CD4-positive, alpha-beta memory T cell (primary cell): ENCODE measurements at regions of chr1 and their contacts with region 1.

Region 1: DNA sequence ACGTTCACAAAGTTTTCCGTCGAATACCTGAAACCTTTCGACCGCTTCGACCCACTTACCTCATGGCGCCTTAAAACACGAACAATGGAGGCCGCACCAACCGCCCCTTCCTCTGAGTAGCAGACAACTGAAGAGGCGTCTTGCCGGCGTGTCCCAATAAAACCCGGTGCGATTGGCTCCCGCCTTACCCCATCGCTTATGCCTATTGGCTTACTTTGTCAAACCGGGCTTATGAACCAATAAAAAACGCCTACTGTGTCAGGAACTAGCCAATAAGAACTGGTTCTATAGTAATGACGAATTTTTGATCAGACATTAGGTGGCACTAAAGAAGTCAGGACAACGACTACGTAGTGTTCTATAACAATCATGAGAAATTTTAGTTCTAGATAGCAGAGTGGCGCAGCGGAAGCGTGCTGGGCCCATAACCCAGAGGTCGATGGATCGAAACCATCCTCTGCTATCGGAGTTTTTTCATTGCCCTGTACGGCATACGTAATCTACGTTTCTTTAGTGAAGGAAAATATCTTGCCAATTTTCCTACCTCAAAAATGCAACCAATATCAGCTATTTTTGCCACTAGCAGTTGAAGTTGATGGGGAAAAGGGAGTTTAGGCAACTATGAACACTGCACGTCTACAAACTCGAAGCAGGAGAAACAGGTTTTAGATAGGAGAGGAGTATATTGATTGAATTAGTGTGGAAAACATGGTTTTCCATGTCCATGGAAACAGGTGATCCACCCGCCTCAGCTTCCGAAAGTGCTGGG is at the start of gene ILF2:
- DNase-seq: peak; percentile 96 to 100 (median 99)
- H3K4me3 ChIP-seq: peak within 1 kb of the TSS; percentile 72 to 98
- H3K4me3 Mint-ChIP-seq: no peak within 1 kb of the TSS
- H3K27ac ChIP-seq: peak within 1 kb of the TSS; percentile 90
- H3K27ac Mint-ChIP-seq: peak within 1 kb of the TSS in 2 of 7 donors; percentile 68 to 77
- H3K4me1 ChIP-seq: peaks cover 26% of the 10 kb centered on the region
- H3K4me1 Mint-ChIP-seq: peaks cover 11 to 16% (median 13%) of the 10 kb centered on the region in 4 donors
- H3K27me3 ChIP-seq: no peaks in the 10 kb centered on the region
- H3K27me3 Mint-ChIP-seq: no peaks in the 10 kb centered on the region
- total RNA-seq, gene ILF2: 82.3 to 87.8 TPM

Region 2: DNA sequence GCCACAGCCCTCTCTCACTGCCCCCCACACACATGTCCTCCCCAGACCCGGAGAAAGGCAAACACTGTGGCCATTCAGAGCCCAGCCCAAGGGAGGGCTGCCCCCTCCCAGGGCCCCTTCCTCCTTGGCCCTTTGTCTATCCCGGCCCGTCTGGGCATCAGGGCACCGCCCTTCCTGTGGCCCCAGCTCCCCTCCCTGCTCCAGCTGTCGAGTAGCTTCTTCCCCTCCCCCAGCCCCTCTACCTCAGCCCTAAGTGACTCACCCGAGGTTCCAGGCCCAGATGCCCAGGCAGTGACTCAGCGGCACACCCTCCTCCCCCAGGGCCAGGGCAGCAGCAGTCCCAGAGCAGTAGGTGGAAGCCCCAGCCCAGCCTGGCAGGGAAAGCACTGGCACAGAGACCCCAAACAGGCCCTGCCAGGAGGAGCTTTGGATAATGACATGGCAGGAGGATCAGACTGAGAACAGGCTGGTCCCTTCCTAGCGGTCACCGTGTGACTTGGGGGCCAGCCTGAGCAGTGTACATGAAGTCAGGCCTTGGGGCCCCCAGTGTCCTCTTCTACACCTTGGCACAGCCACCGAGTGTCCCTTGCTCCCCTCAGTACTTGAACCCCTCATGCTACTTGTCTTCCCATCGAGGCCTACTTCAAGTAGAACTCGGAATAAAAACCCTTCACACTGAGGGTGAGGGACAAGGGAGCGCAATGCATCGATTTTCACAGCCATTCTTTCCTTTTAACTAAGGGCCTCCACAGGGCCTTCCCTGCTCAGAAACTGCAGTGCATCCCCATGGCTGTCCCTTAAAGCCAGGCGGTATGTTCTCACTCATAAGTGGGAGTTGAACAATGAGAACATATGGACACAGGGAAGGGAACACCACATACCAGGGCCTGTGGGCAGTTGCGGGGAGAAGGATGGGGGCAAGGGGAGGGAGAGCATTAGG is 104.3 kb before region 1 on chr1:
- CTCF ChIA-PET with region 1: no interaction called
- POLR2A ChIA-PET with region 1: no interaction called
- intact Hi-C with region 1: loop called (anchors 1 kb)
- DNase-seq: peak; percentile 45 to 93 (median 55)
- H3K4me3 ChIP-seq: peak overlapping the region in 1 of 2 donors; percentile 16
- H3K4me3 Mint-ChIP-seq: peak overlapping the region in 7 of 8 donors; percentile 55 to 81 (median 65)
- H3K27ac ChIP-seq: peak overlapping the region; percentile 42
- H3K27ac Mint-ChIP-seq: peak overlapping the region; percentile 90 to 94 (median 92)
- H3K4me1 ChIP-seq: peaks cover 35% of the 10 kb centered on the region
- H3K4me1 Mint-ChIP-seq: peaks cover 22 to 36% (median 28%) of the 10 kb centered on the region in 4 donors
- H3K27me3 ChIP-seq: no peaks in the 10 kb centered on the region
- H3K27me3 Mint-ChIP-seq: no peaks in the 10 kb centered on the region

Region 3: GRCh38 chr1:153658400-153659174 is 12.5 kb before region 1 on chr1 and contains the start of gene SNAPIN:
- CTCF ChIA-PET with region 1: no interaction called
- POLR2A ChIA-PET with region 1: interaction called, 12 read pairs
- intact Hi-C with region 1: loop called (anchors 1 kb)
- DNase-seq: peak; percentile 88 to 91 (median 89)
- H3K4me3 ChIP-seq: peak within 1 kb of the TSS; percentile 66 to 67
- H3K4me3 Mint-ChIP-seq: peak within 1 kb of the TSS; percentile 94 to 97 (median 96)
- H3K27ac ChIP-seq: peak within 1 kb of the TSS; percentile 89
- H3K27ac Mint-ChIP-seq: peak within 1 kb of the TSS; percentile 89 to 97 (median 95)
- H3K4me1 ChIP-seq: peaks cover 19% of the 10 kb centered on the region
- H3K4me1 Mint-ChIP-seq: peaks cover 9 to 25% (median 14%) of the 10 kb centered on the region in 4 donors
- H3K27me3 ChIP-seq: no peaks in the 10 kb centered on the region
- H3K27me3 Mint-ChIP-seq: no peaks in the 10 kb centered on the region
- total RNA-seq, gene SNAPIN: 26.4 to 28.2 TPM

Region 4: GRCh38 chr1:153783233-153784190 is 112.5 kb after region 1 on chr1:
- CTCF ChIA-PET with region 1: interaction called, 3 read pairs
- POLR2A ChIA-PET with region 1: interaction called, 10 read pairs
- intact Hi-C with region 1: no loop called
- DNase-seq: peak; percentile 89 to 94 (median 92)
- H3K4me3 ChIP-seq: peak overlapping the region; percentile 55 to 73
- H3K4me3 Mint-ChIP-seq: peak overlapping the region; percentile 88 to 97 (median 92)
- H3K27ac ChIP-seq: peak overlapping the region; percentile 84
- H3K27ac Mint-ChIP-seq: peak overlapping the region; percentile 89 to 99 (median 98)
- H3K4me1 ChIP-seq: peaks cover 6% of the 10 kb centered on the region
- H3K4me1 Mint-ChIP-seq: peaks cover 4 to 12% (median 11%) of the 10 kb centered on the region in 4 donors
- H3K27me3 ChIP-seq: no peaks in the 10 kb centered on the region
- H3K27me3 Mint-ChIP-seq: peaks cover 0 to 2% of the 10 kb centered on the region in 2 donors

Region 5: GRCh38 chr1:153958111-153958960 is 287.3 kb after region 1 on chr1 and contains the start of gene CRTC2:
- CTCF ChIA-PET with region 1: no interaction called
- POLR2A ChIA-PET with region 1: interaction called, 10 read pairs
- intact Hi-C with region 1: no loop called
- DNase-seq: peak; percentile 95 to 99 (median 97)
- H3K4me3 ChIP-seq: peak within 1 kb of the TSS; percentile 80 to 99
- H3K4me3 Mint-ChIP-seq: peak within 1 kb of the TSS; percentile 97 to 99 (median 99)
- H3K27ac ChIP-seq: peak within 1 kb of the TSS; percentile 90
- H3K27ac Mint-ChIP-seq: peak within 1 kb of the TSS; percentile 88 to 99 (median 97)
- H3K4me1 ChIP-seq: peaks cover 61% of the 10 kb centered on the region
- H3K4me1 Mint-ChIP-seq: peaks cover 42 to 75% (median 57%) of the 10 kb centered on the region in 4 donors
- H3K27me3 ChIP-seq: no peaks in the 10 kb centered on the region
- H3K27me3 Mint-ChIP-seq: no peaks in the 10 kb centered on the region
- total RNA-seq, gene CRTC2: 112 to 113 TPM

Region 6: GRCh38 chr1:154607609-154608396 is 936.8 kb after region 1 on chr1 and contains the start of gene ADAR:
- CTCF ChIA-PET with region 1: no interaction called
- POLR2A ChIA-PET with region 1: no interaction called
- intact Hi-C with region 1: loop called (anchors 2 kb)
- DNase-seq: peak; percentile 89 to 96 (median 93)
- H3K4me3 ChIP-seq: peak within 1 kb of the TSS; percentile 80 to 94
- H3K4me3 Mint-ChIP-seq: peak within 1 kb of the TSS; percentile 93 to 99 (median 98)
- H3K27ac ChIP-seq: peak within 1 kb of the TSS; percentile 97
- H3K27ac Mint-ChIP-seq: peak within 1 kb of the TSS; percentile 93 to 100 (median 98)
- H3K4me1 ChIP-seq: peaks cover 58% of the 10 kb centered on the region
- H3K4me1 Mint-ChIP-seq: peaks cover 51 to 87% (median 63%) of the 10 kb centered on the region in 4 donors
- H3K27me3 ChIP-seq: no peaks in the 10 kb centered on the region
- H3K27me3 Mint-ChIP-seq: no peaks in the 10 kb centered on the region
- total RNA-seq, gene ADAR: 240 to 247 TPM